Endothelial cell of umbilical vein (primary cell): ENCODE measurements at regions of chr13 and their contacts with region 1.

Region 1: GRCh38 chr13:44312898-44313551 is 60.6 kb upstream of the SERP2 start:
- DNase-seq: peak; percentile 87
- H3K4me3 ChIP-seq: no peak overlapping the region
- H3K27ac ChIP-seq: peak overlapping the region; percentile 81
- H3K4me1 ChIP-seq: peaks cover 23% of the 10 kb centered on the region
- H3K27me3 ChIP-seq: no peaks in the 10 kb centered on the region
- CTCF ChIP-seq: no peak
- POLR2A ChIP-seq: no peak

Region 2: GRCh38 chr13:43905435-43906031 is 407.5 kb before region 1 on chr13:
- CTCF ChIA-PET with region 1: no interaction called
- POLR2A ChIA-PET with region 1: no interaction called
- dilution Hi-C with region 1: no loop called
- intact Hi-C with region 1: no loop called
- DNase-seq: peak; percentile 68
- H3K4me3 ChIP-seq: no peak overlapping the region
- H3K27ac ChIP-seq: no peak overlapping the region
- H3K4me1 ChIP-seq: no peaks in the 10 kb centered on the region
- H3K27me3 ChIP-seq: peaks cover 0 to 6% of the 10 kb centered on the region in 2 experiments
- CTCF ChIP-seq: peak; percentile 43 to 45
- POLR2A ChIP-seq: no peak

Region 3: DNA sequence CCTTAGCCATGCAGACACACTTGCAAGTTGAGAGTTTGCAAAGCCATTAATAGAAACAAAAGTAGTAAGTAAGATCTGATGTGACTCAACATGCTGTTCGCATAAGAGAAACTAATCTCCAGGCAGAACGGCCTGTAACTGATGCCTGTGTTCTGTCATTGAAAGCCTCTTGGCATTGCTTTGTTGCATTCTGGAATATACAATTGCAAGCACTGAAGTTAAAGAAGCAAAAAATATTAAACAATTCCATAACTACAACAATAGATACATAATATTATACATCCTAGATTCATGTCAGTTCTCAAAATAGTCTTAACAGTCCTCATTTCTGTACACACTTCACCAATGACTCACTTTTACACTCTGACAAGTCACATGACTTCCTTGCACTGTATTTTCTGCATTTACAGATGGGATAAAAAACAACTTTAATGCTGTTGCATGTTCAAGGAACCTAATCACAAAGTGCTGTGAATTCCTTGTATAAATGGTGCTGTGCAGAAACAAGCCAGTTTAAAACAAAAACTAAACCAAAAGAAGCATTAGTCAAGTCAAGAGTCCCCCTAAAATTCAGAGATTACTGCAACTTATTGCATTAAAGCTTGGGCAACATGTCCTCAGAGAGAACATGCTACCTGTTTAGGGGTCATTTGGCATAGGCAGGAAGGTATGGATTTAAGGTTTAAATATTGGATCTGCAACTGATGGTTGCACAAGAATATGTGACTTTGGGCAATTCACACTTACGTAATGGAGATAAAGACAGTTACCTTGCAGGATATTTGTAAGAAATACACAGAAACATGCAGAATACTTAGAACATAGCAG is 18.9 kb before region 1 on chr13:
- CTCF ChIA-PET with region 1: no interaction called
- POLR2A ChIA-PET with region 1: no interaction called
- dilution Hi-C with region 1: no loop called
- intact Hi-C with region 1: no loop called
- DNase-seq: peak; percentile 75
- H3K4me3 ChIP-seq: no peak overlapping the region
- H3K27ac ChIP-seq: no peak overlapping the region
- H3K4me1 ChIP-seq: peaks cover 10% of the 10 kb centered on the region
- H3K27me3 ChIP-seq: peaks cover 4 to 8% of the 10 kb centered on the region in 2 experiments
- CTCF ChIP-seq: no peak
- POLR2A ChIP-seq: no peak

Region 4: DNA sequence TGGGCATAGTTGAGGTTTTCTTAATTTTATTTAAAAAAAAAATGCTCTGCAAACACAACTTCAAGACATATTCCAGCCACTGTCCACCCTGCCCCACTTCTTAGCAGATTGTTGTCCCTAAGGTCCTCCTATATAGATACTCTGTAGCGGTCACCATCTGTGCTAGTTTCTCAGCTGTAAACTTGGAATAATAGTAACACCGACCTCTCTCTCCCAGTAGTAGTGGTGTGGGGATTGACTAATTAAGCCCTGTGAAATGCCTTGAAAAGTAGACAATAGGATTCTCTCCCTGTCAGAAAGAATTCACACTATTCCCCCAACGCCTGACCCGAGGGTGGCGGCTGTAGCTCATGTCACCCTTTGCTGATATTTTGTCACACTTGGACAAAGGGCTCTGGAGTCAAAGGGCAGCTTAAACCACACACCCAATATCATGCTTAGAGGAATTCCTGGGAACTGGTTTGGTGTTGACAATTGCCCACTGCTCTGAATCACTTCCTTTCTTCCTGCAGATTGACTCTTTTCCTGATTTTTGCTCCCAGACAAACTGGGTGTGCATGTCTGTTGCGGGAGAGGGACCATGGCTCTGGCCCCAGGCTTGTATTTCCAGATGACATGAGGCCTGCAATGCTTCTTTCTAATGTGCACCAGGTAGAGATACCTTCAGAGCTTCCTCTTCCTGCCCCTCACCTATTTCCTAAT is 51.5 kb after region 1 on chr13:
- CTCF ChIA-PET with region 1: no interaction called
- POLR2A ChIA-PET with region 1: no interaction called
- dilution Hi-C with region 1: no loop called
- intact Hi-C with region 1: loop called (anchors 1 kb)
- DNase-seq: peak; percentile 90
- H3K4me3 ChIP-seq: no peak overlapping the region
- H3K27ac ChIP-seq: peak overlapping the region; percentile 89
- H3K4me1 ChIP-seq: peaks cover 51% of the 10 kb centered on the region
- H3K27me3 ChIP-seq: no peaks in the 10 kb centered on the region
- CTCF ChIP-seq: no peak
- POLR2A ChIP-seq: peak; percentile 25